Left colon (tissue), 2 donors: ENCODE measurements at regions of chr15 and their contacts with region 1.

Region 1: DNA sequence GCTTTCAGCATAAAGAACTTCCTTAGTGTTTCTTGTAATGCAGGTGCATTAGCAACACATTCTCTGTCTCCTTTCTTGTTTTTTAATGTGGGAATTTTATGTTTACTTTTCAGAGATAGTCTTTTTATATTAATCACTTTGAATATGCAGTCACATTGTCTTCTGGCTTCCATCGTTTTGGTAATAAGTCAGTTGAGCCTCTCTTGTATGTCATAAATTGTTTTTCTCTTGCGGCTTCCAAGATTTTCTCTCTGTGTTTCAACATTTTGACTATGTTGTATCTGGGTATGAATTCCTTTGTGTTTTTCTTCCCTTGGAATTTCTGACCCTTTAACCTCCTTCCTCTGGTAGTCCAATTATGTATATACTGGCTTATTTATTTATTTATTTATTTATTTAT is 25.3 kb downstream of the GABRG3 start:
- DNase-seq: no peak
- ATAC-seq: no peak

Region 2: DNA sequence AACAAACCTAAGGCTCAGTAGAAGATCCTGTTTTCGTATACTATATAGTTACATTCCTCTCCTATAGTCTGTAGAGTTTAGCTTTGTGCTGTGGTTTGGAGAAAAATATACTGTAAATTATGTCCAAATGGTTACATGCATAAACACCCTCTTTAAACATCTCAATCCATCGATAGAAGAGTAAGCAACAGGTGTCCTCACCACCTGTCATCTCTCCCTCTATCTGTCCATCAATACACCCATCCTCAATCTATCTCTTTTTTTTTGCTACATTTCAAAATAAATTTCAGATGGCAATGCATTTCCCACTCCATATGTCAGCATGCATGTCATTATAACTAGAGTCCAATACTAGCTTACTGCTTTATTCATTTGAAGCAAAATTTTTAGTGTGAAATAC is 46.2 kb before region 1 on chr15:
- intact Hi-C with region 1: loop called in 1 of 2 experiments (anchors 5 kb)
- DNase-seq: no peak
- ATAC-seq: no peak

Region 3: DNA sequence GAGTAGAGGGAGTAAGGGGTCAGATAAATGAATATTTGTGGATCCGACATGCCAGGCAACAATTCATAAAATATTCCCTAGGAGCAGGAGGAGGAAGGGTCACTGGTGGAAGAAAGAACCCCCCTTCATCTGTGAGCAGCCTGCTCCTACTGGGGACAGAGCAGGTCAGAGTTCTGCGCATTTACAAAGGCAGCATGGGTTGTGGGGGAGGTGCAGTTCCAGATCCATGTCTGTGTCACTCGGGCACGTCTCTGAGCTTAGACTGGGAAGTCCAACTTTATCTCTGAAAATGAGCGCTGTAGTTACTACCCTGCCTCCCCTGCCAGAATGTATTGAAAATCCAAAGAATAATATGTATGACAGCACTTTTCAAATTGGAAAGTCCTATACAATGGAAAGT is 89.9 kb after region 1 on chr15:
- intact Hi-C with region 1: no loop called
- DNase-seq: no peak
- ATAC-seq: no peak

Region 4: DNA sequence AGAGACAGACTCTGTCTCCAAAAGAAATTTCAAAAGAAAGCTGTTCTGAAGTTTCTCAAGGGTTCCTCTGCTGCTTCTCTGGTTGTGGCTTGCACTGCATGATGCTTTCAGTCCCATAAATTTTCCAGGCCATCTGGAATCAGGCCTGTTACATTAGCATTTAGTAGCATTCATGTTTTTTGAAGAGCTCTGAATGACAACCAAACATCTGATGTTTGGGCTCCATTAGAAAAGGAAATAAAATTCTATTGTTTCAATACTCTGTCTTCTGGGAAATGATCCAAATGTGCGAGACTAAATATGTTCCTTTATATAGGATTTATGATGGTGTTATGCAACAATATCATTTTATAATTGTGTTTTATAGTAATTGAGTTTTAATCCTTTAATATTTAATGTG is 430.6 kb after region 1 on chr15:
- intact Hi-C with region 1: no loop called
- DNase-seq: no peak
- ATAC-seq: no peak